ENCODE measurements at regions of chr15 and their contacts with region 1.

Region 1: DNA sequence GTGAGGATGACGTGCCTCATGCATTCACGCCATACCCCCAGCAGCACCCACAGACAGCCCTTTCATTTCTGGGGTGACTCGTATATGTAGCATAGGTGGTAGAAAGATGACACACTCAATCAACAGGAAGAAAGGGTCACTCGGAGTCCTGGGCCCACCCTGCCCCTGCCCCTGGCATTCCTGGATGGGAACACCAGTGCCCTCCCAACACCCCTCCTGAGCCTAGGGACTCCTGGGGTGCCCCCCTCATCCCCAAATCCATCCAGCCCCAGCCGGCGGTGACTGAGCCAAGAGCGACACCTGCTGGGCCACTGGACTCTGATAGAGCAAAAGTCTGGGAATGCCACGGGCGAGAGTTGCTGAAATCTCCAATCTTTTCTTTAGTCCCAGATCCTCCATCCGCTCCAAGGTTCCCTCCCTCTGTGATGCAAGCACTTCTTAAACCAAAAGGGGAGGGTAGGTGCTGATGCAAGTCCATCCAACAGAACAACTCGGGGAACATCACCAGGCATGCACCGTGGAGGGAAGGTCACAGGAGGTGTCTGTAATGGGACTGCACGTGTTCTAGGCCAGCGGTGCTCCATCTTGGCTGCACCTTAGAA is 31.1 kb downstream of the ACAN start:
- DNase-seq: peak; percentile 24
- H3K4me3 ChIP-seq: no peak overlapping the region
- H3K27ac ChIP-seq: no peak overlapping the region
- H3K4me1 ChIP-seq: no peaks in the 10 kb centered on the region
- H3K27me3 ChIP-seq: no peaks in the 10 kb centered on the region
- CTCF ChIP-seq: peak; percentile 32 to 47 (median 45)
- EP300 ChIP-seq: no peak
- POLR2A ChIP-seq: no peak

Region 2: GRCh38 chr15:88657326-88658069 is 176.8 kb before region 1 on chr15:
- in situ Hi-C with region 1: loop called in 1 of 4 experiments (anchors 25 kb)
- intact Hi-C with region 1: loop called (anchors 5 kb)
- DNase-seq: no peak
- H3K4me3 ChIP-seq: no peak overlapping the region
- H3K27ac ChIP-seq: peak overlapping the region in 2 of 4 donors; percentile 5 to 18
- H3K4me1 ChIP-seq: no peaks in the 10 kb centered on the region
- H3K27me3 ChIP-seq: no peaks in the 10 kb centered on the region
- CTCF ChIP-seq: peak; percentile 56 to 67 (median 66)
- EP300 ChIP-seq: no peak
- POLR2A ChIP-seq: no peak

Region 3: DNA sequence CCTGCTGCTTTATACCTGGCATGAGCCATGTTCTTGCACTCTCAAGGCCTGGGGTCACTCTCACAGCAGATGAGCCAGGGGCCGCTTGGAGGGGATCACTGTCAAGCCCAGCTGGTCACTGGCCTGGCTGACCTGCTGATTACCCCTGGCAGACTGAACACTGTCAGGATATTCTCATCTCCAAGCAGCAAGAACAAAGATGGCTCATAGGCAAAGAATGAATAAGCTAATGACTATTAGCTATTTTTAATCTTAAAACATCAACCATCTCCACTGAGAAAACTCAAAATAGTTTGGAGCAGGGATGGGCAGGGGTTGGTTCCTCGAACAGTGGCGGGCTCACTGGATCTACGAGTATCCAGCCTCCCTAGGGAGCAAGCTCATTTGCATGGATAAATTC is 95.5 kb before region 1 on chr15:
- in situ Hi-C with region 1: no loop called
- intact Hi-C with region 1: no loop called
- DNase-seq: no peak
- H3K4me3 ChIP-seq: no peak overlapping the region
- H3K27ac ChIP-seq: no peak overlapping the region
- H3K4me1 ChIP-seq: no peaks in the 10 kb centered on the region
- H3K27me3 ChIP-seq: peaks cover 10% of the 10 kb centered on the region
- CTCF ChIP-seq: no peak
- EP300 ChIP-seq: no peak
- POLR2A ChIP-seq: no peak